ENCODE measurements at regions of chr17 and their contacts with region 1.

Region 1: GRCh38 chr17:49031965-49032928 is 35.1 kb downstream of the IGF2BP1 start:
- DNase-seq: peak; percentile 80
- H3K4me3 ChIP-seq: no peak overlapping the region
- H3K27ac ChIP-seq: no peak overlapping the region
- H3K4me1 ChIP-seq: peaks cover 35% of the 10 kb centered on the region
- H3K27me3 ChIP-seq: no peaks in the 10 kb centered on the region
- CTCF ChIP-seq: peak; percentile 51 to 67
- POLR2A ChIP-seq: peak; percentile 53

Region 2: DNA sequence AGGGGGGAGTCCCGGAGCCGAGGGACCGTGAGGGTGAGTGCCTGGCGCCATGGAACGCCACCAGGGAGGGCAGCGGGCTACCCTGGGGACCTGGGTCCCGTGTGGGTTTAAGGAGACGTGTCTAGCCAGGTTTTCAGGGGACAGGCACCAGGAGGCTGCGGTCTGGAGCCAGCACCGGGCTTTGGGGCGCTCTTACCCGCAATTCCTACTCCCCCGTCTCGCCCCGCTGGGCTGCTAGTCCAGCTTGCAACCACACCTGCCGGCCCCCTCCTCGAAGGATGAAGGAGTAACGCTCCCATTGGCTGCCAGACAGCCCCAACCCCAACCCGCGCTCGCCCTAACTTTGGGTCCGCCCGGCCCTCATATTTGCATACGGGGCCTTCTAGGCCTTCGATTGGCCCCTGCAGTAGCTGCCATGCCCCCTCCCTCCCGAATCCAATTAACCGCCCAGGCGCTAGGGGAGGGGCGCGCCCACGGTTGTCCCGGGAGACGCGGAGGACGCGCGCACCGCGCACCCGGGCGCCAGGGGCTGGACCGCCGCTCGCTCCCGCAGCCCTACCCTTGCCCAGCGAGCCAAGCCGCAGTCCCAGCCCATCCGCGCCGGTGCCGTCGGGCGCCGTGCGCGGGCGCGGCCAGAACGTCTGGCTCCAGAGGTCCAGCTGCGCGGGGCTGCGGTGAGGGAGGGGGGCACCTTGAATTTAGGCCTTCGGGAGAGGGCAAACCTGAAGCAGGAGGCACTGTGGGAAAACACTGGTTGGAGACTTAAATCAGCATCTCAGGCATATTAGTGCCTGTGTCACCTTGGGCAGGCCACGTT is 215.3 kb before region 1 on chr17 and contains the start of gene TTLL6:
- CTCF ChIA-PET with region 1: interaction called, 10 read pairs
- POLR2A ChIA-PET with region 1: no interaction called
- dilution Hi-C with region 1: no loop called
- intact Hi-C with region 1: loop called (anchors 5 kb)
- DNase-seq: peak; percentile 85
- H3K4me3 ChIP-seq: peak within 1 kb of the TSS in 2 of 3 experiments; percentile 14 to 40
- H3K27ac ChIP-seq: no peak within 1 kb of the TSS
- H3K4me1 ChIP-seq: peaks cover 6% of the 10 kb centered on the region
- H3K27me3 ChIP-seq: peaks cover 11 to 21% of the 10 kb centered on the region in 2 experiments
- CTCF ChIP-seq: no peak
- POLR2A ChIP-seq: no peak
- total RNA-seq, gene TTLL6: not detected in 2 replicates

Region 3: GRCh38 chr17:48915459-48916282 is 116.6 kb before region 1 on chr17:
- CTCF ChIA-PET with region 1: interaction called, 11 read pairs
- POLR2A ChIA-PET with region 1: no interaction called
- dilution Hi-C with region 1: no loop called
- intact Hi-C with region 1: loop called (anchors 1 kb)
- DNase-seq: peak; percentile 47
- H3K4me3 ChIP-seq: no peak overlapping the region
- H3K27ac ChIP-seq: peak overlapping the region; percentile 62
- H3K4me1 ChIP-seq: peaks cover 9% of the 10 kb centered on the region
- H3K27me3 ChIP-seq: no peaks in the 10 kb centered on the region
- CTCF ChIP-seq: no peak
- POLR2A ChIP-seq: no peak

Region 4: GRCh38 chr17:48954300-48954755 is 77.9 kb before region 1 on chr17:
- CTCF ChIA-PET with region 1: interaction called, 113 read pairs
- POLR2A ChIA-PET with region 1: no interaction called
- dilution Hi-C with region 1: no loop called
- intact Hi-C with region 1: loop called (anchors 1 kb)
- DNase-seq: peak; percentile 69
- H3K4me3 ChIP-seq: no peak overlapping the region
- H3K27ac ChIP-seq: no peak overlapping the region
- H3K4me1 ChIP-seq: no peaks in the 10 kb centered on the region
- H3K27me3 ChIP-seq: peaks cover 0 to 2% of the 10 kb centered on the region in 2 experiments
- CTCF ChIP-seq: peak; percentile 66 to 69
- POLR2A ChIP-seq: no peak

Region 5: GRCh38 chr17:48985436-48986245 is 46.6 kb before region 1 on chr17:
- CTCF ChIA-PET with region 1: interaction called, 11 read pairs
- POLR2A ChIA-PET with region 1: interaction called, 3 read pairs
- dilution Hi-C with region 1: no loop called
- intact Hi-C with region 1: no loop called
- DNase-seq: no peak
- H3K4me3 ChIP-seq: no peak overlapping the region
- H3K27ac ChIP-seq: no peak overlapping the region
- H3K4me1 ChIP-seq: no peaks in the 10 kb centered on the region
- H3K27me3 ChIP-seq: peaks cover 12 to 20% of the 10 kb centered on the region in 2 experiments
- CTCF ChIP-seq: no peak
- POLR2A ChIP-seq: no peak

Region 6: DNA sequence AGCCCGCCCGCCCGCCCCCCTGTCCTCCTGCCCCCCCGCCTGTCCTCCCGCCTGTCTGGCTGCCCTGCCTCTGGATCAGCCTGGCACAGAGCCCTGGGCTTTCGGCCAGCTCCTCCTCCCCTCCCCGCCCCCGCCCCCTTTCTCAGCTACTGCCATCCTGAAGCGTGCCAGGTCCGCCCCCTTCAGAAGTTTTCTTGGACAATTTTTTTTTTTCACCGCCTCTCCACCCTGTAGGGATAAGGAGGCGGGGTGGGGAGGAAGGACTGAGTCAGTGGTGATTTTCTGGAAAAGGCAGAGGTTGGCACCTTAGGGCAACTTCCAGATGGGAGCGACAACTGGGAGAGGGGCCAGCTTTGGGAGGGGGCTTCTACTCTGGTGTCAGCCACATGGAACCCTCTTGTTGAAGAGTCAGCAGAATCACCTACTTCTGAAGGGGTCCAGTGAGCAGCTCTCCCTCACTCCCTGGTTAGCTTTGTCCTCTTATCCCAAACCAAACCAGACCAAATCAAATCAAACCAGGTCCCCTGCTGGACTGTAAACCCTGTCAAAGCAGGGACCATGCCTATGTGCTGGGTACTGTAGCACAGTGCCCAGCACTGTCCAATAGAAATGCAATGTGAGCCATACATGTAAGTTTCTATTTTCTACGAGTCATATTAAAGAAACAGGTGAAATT is 15.3 kb before region 1 on chr17:
- CTCF ChIA-PET with region 1: interaction called, 156 read pairs
- POLR2A ChIA-PET with region 1: interaction called, 9 read pairs
- dilution Hi-C with region 1: no loop called
- intact Hi-C with region 1: loop called (anchors 1 kb)
- DNase-seq: peak; percentile 94
- H3K4me3 ChIP-seq: no peak overlapping the region
- H3K27ac ChIP-seq: peak overlapping the region; percentile 45
- H3K4me1 ChIP-seq: peaks cover 52% of the 10 kb centered on the region
- H3K27me3 ChIP-seq: no peaks in the 10 kb centered on the region
- CTCF ChIP-seq: no peak
- POLR2A ChIP-seq: no peak

Region 7: DNA sequence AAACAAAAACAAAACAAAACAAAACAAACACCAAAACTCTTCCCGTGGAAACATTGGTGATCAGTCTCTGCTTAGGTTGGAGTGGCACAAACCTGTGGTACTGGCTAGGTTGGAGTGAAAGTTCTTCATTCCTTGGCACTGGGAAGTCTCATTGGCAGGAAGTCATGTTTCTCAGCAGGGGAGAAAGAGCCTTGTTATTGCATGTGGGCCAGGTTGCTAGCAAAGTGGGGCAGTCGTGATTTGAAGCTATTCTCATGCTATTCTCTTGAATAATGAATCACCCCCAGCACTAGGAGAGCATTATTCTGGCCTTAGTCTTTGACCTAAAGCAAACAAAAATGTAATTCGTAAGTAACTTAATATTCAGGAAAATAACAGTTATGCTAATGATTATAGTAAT is 76.1 kb after region 1 on chr17:
- CTCF ChIA-PET with region 1: no interaction called
- POLR2A ChIA-PET with region 1: no interaction called
- dilution Hi-C with region 1: no loop called
- intact Hi-C with region 1: no loop called
- DNase-seq: no peak
- H3K4me3 ChIP-seq: no peak overlapping the region
- H3K27ac ChIP-seq: no peak overlapping the region
- H3K4me1 ChIP-seq: no peaks in the 10 kb centered on the region
- H3K27me3 ChIP-seq: no peaks in the 10 kb centered on the region
- CTCF ChIP-seq: no peak
- POLR2A ChIP-seq: no peak

Region 8: GRCh38 chr17:49290690-49291359 is 258.6 kb after region 1 on chr17:
- CTCF ChIA-PET with region 1: interaction called, 10 read pairs
- POLR2A ChIA-PET with region 1: no interaction called
- dilution Hi-C with region 1: no loop called
- intact Hi-C with region 1: no loop called
- DNase-seq: peak; percentile 65
- H3K4me3 ChIP-seq: no peak overlapping the region
- H3K27ac ChIP-seq: no peak overlapping the region
- H3K4me1 ChIP-seq: no peaks in the 10 kb centered on the region
- H3K27me3 ChIP-seq: no peaks in the 10 kb centered on the region
- CTCF ChIP-seq: peak; percentile 55 to 63
- POLR2A ChIP-seq: no peak

Measured in endothelial cell of umbilical vein (primary cell).